GM12878 (cell line): ENCODE measurements at regions of chr21 and their contacts with region 1.

Region 1: GRCh38 chr21:41283211-41283818 is 33.3 kb upstream of the FAM3B start:
- DNase-seq: peak; percentile 61
- ATAC-seq: peak; percentile 99
- H3K4me3 ChIP-seq: no peak overlapping the region
- H3K27ac ChIP-seq: no peak overlapping the region
- H3K4me1 ChIP-seq: no peaks in the 10 kb centered on the region
- H3K27me3 ChIP-seq: peaks cover 2 to 6% of the 10 kb centered on the region in 2 experiments
- CTCF ChIP-seq: peak; percentile 72 to 94 (median 84); a peak in 5 of 6 replicates
- EP300 ChIP-seq: no peak
- POLR2A ChIP-seq: no peak
- RAD21 ChIP-seq: peak; percentile 93

Region 2: DNA sequence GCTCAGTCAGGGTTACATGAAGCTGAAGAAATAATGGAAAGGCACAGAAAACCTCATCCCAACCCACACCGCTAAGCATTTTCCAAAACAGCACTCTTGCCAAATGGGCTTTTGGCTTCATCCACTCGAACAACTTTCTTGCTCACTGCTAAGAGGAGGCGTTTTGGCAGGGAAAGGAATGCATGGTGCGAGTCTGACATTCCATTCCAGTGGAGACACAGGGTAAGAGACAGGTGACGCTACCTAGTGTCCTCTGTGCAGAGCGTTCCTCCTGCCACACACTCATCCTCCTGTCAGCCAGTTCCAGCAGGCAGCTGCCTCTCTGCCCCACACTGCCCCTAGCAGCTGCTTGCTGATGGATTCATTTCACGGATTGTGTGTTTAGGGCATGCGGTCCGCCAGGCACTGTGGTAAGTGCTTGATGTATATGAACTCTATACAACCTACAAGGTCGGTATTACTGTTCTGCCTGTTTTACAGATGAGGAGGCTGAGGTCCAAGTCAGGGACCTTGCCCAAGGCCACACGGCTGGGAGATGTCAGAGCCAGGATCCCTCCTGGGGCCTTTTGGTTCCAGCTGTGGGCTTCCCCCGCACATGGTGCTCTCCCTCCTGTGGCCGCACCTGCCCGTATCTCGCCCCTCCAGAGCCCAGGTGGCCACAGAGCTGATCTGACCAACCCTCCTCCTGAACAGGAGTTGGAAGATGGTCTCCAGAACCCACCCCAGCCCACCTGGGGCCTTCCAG is 141.1 kb before region 1 on chr21:
- CTCF ChIA-PET with region 1: no interaction called
- POLR2A ChIA-PET with region 1: no interaction called
- RAD21 ChIA-PET with region 1: no interaction called
- SMC1A ChIA-PET with region 1: no interaction called
- in situ Hi-C with region 1: no loop called
- intact Hi-C with region 1: no loop called
- DNase-seq: no peak
- ATAC-seq: no peak
- H3K4me3 ChIP-seq: no peak overlapping the region
- H3K27ac ChIP-seq: no peak overlapping the region
- H3K4me1 ChIP-seq: no peaks in the 10 kb centered on the region
- H3K27me3 ChIP-seq: no peaks in the 10 kb centered on the region
- CTCF ChIP-seq: no peak
- EP300 ChIP-seq: no peak
- POLR2A ChIP-seq: no peak
- RAD21 ChIP-seq: no peak

Region 3: DNA sequence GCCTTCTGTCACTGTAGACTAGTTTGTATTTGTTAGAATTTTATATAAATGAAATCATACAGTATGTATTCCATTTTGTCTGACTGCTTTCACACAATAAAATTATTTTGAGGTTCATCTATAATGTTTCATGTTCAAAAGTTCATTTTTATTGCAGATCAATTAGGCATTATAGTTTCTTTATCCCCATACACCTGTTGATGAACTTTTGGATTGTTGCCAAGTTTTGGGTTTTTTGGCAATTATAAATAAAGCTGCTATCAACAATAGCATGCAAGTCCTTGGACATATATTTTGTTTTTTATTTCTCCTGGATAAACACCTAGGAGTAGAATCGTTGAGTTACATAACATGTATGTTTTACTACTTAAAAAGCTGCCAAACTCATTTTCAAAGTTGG is 13.8 kb before region 1 on chr21:
- CTCF ChIA-PET with region 1: interaction called, 7 read pairs
- POLR2A ChIA-PET with region 1: no interaction called
- RAD21 ChIA-PET with region 1: no interaction called
- SMC1A ChIA-PET with region 1: interaction called, 15 read pairs
- in situ Hi-C with region 1: no loop called
- intact Hi-C with region 1: no loop called
- DNase-seq: no peak
- ATAC-seq: no peak
- H3K4me3 ChIP-seq: no peak overlapping the region
- H3K27ac ChIP-seq: no peak overlapping the region
- H3K4me1 ChIP-seq: no peaks in the 10 kb centered on the region
- H3K27me3 ChIP-seq: no peaks in the 10 kb centered on the region
- CTCF ChIP-seq: no peak
- EP300 ChIP-seq: no peak
- POLR2A ChIP-seq: no peak
- RAD21 ChIP-seq: no peak

Region 4: GRCh38 chr21:41369105-41369919 is 86.0 kb after region 1 on chr21:
- CTCF ChIA-PET with region 1: interaction called, 99 read pairs
- POLR2A ChIA-PET with region 1: interaction called, 13 read pairs
- RAD21 ChIA-PET with region 1: interaction called, 97 read pairs
- SMC1A ChIA-PET with region 1: interaction called, 67 read pairs
- in situ Hi-C with region 1: no loop called
- intact Hi-C with region 1: loop called (anchors 5 kb)
- DNase-seq: peak; percentile 42
- ATAC-seq: peak; percentile 47
- H3K4me3 ChIP-seq: peak overlapping the region; percentile 78
- H3K27ac ChIP-seq: peak overlapping the region; percentile 98
- H3K4me1 ChIP-seq: peaks cover 42% of the 10 kb centered on the region
- H3K27me3 ChIP-seq: no peaks in the 10 kb centered on the region
- CTCF ChIP-seq: peak; percentile 24 to 60 (median 25); a peak in 4 of 6 replicates
- EP300 ChIP-seq: no peak
- POLR2A ChIP-seq: peak; percentile 70
- RAD21 ChIP-seq: peak; percentile 41

Region 5: GRCh38 chr21:41419911-41420862 is 136.9 kb after region 1 on chr21:
- CTCF ChIA-PET with region 1: interaction called, 16 read pairs
- POLR2A ChIA-PET with region 1: no interaction called
- RAD21 ChIA-PET with region 1: interaction called, 10 read pairs
- SMC1A ChIA-PET with region 1: interaction called, 11 read pairs
- in situ Hi-C with region 1: no loop called
- intact Hi-C with region 1: no loop called
- DNase-seq: peak; percentile 39
- ATAC-seq: peak; percentile 94
- H3K4me3 ChIP-seq: peak overlapping the region; percentile 79
- H3K27ac ChIP-seq: peak overlapping the region; percentile 82
- H3K4me1 ChIP-seq: peaks cover 24% of the 10 kb centered on the region
- H3K27me3 ChIP-seq: no peaks in the 10 kb centered on the region
- CTCF ChIP-seq: no peak
- EP300 ChIP-seq: no peak; a peak in 1 of 4 replicates
- POLR2A ChIP-seq: peak; percentile 49; the same call in 1 of the 2 replicates
- RAD21 ChIP-seq: no peak

Region 6: DNA sequence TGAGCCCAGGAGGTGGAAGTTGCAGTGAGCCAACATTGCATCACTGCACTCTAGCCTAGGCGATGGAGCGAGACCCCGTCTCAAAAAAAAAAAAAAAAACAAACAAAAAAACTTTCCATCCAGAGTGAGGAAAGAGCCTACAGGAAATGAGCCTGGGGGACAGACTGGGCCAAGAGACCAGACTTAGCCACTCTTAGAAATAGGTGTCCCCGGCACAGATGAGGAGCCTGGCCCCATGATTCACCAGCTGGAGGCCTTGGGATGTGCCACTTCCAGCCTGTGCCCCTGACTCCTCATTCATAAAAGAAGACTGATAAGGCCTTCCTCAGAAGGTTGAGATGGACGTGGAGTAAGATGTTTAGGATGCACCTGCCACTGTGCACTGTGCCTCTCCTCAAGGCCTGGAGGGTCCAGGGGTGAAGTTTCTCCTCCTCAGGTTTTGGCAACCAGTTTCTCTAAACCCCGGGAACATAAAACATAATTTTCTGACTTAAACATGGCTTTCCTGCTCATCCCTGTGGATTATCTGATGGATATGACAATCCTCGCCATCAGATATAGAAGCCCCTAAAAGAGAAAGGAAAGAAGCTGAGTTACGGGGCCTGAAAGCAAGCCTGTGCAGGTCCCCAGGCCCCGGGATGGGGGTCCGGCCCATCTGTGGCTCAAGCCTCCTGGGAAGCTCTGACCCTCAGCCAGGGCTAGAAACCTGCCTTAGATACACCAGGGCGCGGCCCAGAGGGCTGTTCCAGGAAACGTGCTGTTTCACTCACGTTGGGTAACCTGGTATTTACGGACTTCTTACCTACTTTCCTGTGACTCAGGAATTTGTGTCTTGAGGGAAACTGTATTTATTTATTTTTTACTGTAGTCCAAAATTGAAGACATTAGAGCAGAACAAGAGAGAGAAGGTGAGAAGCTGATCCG is 168.7 kb after region 1 on chr21:
- CTCF ChIA-PET with region 1: interaction called, 16 read pairs
- POLR2A ChIA-PET with region 1: no interaction called
- RAD21 ChIA-PET with region 1: interaction called, 9 read pairs
- SMC1A ChIA-PET with region 1: interaction called, 21 read pairs
- in situ Hi-C with region 1: loop called (anchors 5 kb)
- intact Hi-C with region 1: no loop called
- DNase-seq: no peak
- ATAC-seq: no peak; the same call in 2 of the 3 replicates
- H3K4me3 ChIP-seq: no peak overlapping the region
- H3K27ac ChIP-seq: no peak overlapping the region
- H3K4me1 ChIP-seq: no peaks in the 10 kb centered on the region
- H3K27me3 ChIP-seq: no peaks in the 10 kb centered on the region
- CTCF ChIP-seq: no peak
- EP300 ChIP-seq: no peak
- POLR2A ChIP-seq: peak; percentile 51; the same call in 1 of the 2 replicates
- RAD21 ChIP-seq: no peak

Region 7: GRCh38 chr21:41612674-41613532 is 329.6 kb after region 1 on chr21:
- CTCF ChIA-PET with region 1: interaction called, 42 read pairs
- POLR2A ChIA-PET with region 1: no interaction called
- RAD21 ChIA-PET with region 1: interaction called, 29 read pairs
- SMC1A ChIA-PET with region 1: interaction called, 8 read pairs
- in situ Hi-C with region 1: no loop called
- intact Hi-C with region 1: loop called (anchors 5 kb)
- DNase-seq: no peak
- ATAC-seq: peak; percentile 77
- H3K4me3 ChIP-seq: no peak overlapping the region
- H3K27ac ChIP-seq: no peak overlapping the region
- H3K4me1 ChIP-seq: no peaks in the 10 kb centered on the region
- H3K27me3 ChIP-seq: no peaks in the 10 kb centered on the region
- CTCF ChIP-seq: peak; percentile 47 to 68 (median 56)
- EP300 ChIP-seq: no peak
- POLR2A ChIP-seq: no peak
- RAD21 ChIP-seq: peak; percentile 49